ENCODE measurements at regions of chr2 and their contacts with region 1.

Region 1: DNA sequence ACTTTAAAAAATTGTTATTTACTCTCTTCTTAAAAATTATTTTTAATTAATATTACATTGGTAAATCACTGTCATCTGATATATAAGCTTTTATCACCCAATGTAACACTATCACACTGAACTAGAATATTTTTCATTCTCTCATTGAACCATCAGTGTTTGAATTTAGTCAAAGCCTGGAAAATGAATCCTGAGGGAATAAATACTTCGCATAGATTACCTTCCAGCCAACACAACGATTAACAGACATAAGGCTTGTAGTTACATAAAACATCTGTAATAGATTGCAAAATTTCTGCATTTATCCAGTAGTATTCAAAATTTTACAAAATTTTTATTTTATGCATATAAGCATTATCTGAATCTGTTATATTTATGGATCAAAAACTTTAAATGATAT is 314.9 kb downstream of the ERBB4 start:
- DNase-seq: no peak
- H3K4me3 ChIP-seq: no peak overlapping the region
- H3K27ac ChIP-seq: no peak overlapping the region
- H3K4me1 ChIP-seq: no peaks in the 10 kb centered on the region
- H3K27me3 ChIP-seq: no peaks in the 10 kb centered on the region
- CTCF ChIP-seq: no peak
- POLR2A ChIP-seq: no peak

Region 2: GRCh38 chr2:212494413-212495020 is 270.8 kb after region 1 on chr2:
- intact Hi-C with region 1: loop called (anchors 5 kb)
- DNase-seq: no peak
- H3K4me3 ChIP-seq: no peak overlapping the region
- H3K27ac ChIP-seq: no peak overlapping the region
- H3K4me1 ChIP-seq: no peaks in the 10 kb centered on the region
- H3K27me3 ChIP-seq: no peaks in the 10 kb centered on the region
- CTCF ChIP-seq: no peak
- POLR2A ChIP-seq: no peak